CD4-positive, alpha-beta memory T cell (primary cell): ENCODE measurements at regions of chr3 and their contacts with region 1.

Region 1: GRCh38 chr3:156554842-156555687 is at the start of gene SSR3:
- DNase-seq: peak; percentile 97 to 99 (median 99)
- H3K4me3 ChIP-seq: peak within 1 kb of the TSS; percentile 67 to 97
- H3K4me3 Mint-ChIP-seq: peak within 1 kb of the TSS; percentile 89 to 99 (median 98)
- H3K27ac ChIP-seq: peak within 1 kb of the TSS; percentile 72
- H3K27ac Mint-ChIP-seq: peak within 1 kb of the TSS; percentile 94 to 98 (median 95)
- H3K4me1 ChIP-seq: peaks cover 40% of the 10 kb centered on the region
- H3K4me1 Mint-ChIP-seq: peaks cover 31 to 55% (median 42%) of the 10 kb centered on the region in 4 donors
- H3K27me3 ChIP-seq: no peaks in the 10 kb centered on the region
- H3K27me3 Mint-ChIP-seq: peaks cover 0 to 5% of the 10 kb centered on the region in 2 donors
- total RNA-seq, gene SSR3: 132 to 138 TPM

Region 2: GRCh38 chr3:156483961-156484787 is 70.9 kb before region 1 on chr3:
- CTCF ChIA-PET with region 1: interaction called, 3 read pairs
- POLR2A ChIA-PET with region 1: interaction called, 23 read pairs
- intact Hi-C with region 1: loop called (anchors 1 kb)
- DNase-seq: peak; percentile 55 to 81 (median 64)
- H3K4me3 ChIP-seq: peak overlapping the region; percentile 42 to 55
- H3K4me3 Mint-ChIP-seq: peak overlapping the region; percentile 21 to 87 (median 77)
- H3K27ac ChIP-seq: peak overlapping the region; percentile 63
- H3K27ac Mint-ChIP-seq: peak overlapping the region; percentile 77 to 94 (median 92)
- H3K4me1 ChIP-seq: peaks cover 43% of the 10 kb centered on the region
- H3K4me1 Mint-ChIP-seq: peaks cover 32 to 52% (median 39%) of the 10 kb centered on the region in 4 donors
- H3K27me3 ChIP-seq: no peaks in the 10 kb centered on the region
- H3K27me3 Mint-ChIP-seq: no peaks in the 10 kb centered on the region

Region 3: GRCh38 chr3:156633335-156633734 is 78.3 kb after region 1 on chr3:
- CTCF ChIA-PET with region 1: no interaction called
- POLR2A ChIA-PET with region 1: no interaction called
- intact Hi-C with region 1: no loop called
- DNase-seq: no peak
- H3K4me3 ChIP-seq: no peak overlapping the region
- H3K4me3 Mint-ChIP-seq: no peak overlapping the region
- H3K27ac ChIP-seq: no peak overlapping the region
- H3K27ac Mint-ChIP-seq: no peak overlapping the region
- H3K4me1 ChIP-seq: no peaks in the 10 kb centered on the region
- H3K4me1 Mint-ChIP-seq: no peaks in the 10 kb centered on the region
- H3K27me3 ChIP-seq: no peaks in the 10 kb centered on the region
- H3K27me3 Mint-ChIP-seq: no peaks in the 10 kb centered on the region

Region 4: DNA sequence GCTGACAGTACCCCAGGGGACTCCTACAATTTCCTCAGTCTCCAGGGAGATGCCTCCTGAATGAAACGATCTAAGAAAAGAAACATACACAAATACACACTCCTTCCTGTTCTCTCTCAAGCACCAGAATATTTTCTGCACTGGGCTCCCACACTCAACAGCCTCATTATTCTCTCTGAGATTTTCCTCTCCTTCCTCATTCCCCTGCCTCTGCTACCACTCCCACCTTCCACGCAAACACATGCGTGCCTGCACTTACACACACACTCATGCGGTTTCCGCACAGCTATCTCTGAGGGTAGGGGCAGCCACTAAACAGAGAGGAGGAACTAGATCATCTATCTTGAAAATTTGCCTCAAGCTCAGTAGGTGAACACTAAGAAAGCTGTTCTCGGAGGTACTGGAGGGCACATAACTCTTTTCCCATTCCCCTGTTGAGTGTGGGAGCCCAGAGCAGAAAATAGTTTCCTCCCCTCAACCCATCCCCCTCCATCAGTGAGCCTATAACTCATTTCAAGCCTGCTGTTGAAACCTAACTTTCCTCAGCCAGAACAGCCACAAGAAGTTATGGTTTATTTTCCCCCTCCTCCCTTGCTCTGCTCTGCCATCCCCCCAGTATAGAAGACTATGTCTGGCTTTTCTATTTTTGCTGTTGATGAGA is 88.8 kb after region 1 on chr3:
- CTCF ChIA-PET with region 1: no interaction called
- POLR2A ChIA-PET with region 1: interaction called, 14 read pairs
- intact Hi-C with region 1: no loop called
- DNase-seq: peak; percentile 22 to 45 (median 38)
- H3K4me3 ChIP-seq: no peak overlapping the region
- H3K4me3 Mint-ChIP-seq: peak overlapping the region; percentile 37 to 83 (median 61)
- H3K27ac ChIP-seq: no peak overlapping the region
- H3K27ac Mint-ChIP-seq: peak overlapping the region in 6 of 7 donors; percentile 1 to 88 (median 73)
- H3K4me1 ChIP-seq: peaks cover 21% of the 10 kb centered on the region
- H3K4me1 Mint-ChIP-seq: peaks cover 7 to 15% (median 11%) of the 10 kb centered on the region in 4 donors
- H3K27me3 ChIP-seq: no peaks in the 10 kb centered on the region
- H3K27me3 Mint-ChIP-seq: peaks cover 3 to 5% of the 10 kb centered on the region in 2 donors

Region 5: GRCh38 chr3:156681002-156681401 is 125.9 kb after region 1 on chr3:
- CTCF ChIA-PET with region 1: interaction called, 12 read pairs
- POLR2A ChIA-PET with region 1: interaction called, 140 read pairs
- intact Hi-C with region 1: no loop called
- DNase-seq: no peak
- H3K4me3 ChIP-seq: no peak overlapping the region
- H3K4me3 Mint-ChIP-seq: peak overlapping the region; percentile 65 to 73 (median 68)
- H3K27ac ChIP-seq: no peak overlapping the region
- H3K27ac Mint-ChIP-seq: peak overlapping the region in 6 of 7 donors; percentile 17 to 75 (median 62)
- H3K4me1 ChIP-seq: peaks cover 99% of the 10 kb centered on the region
- H3K4me1 Mint-ChIP-seq: peaks cover 64 to 93% (median 81%) of the 10 kb centered on the region in 4 donors
- H3K27me3 ChIP-seq: no peaks in the 10 kb centered on the region
- H3K27me3 Mint-ChIP-seq: no peaks in the 10 kb centered on the region

Region 6: GRCh38 chr3:156772581-156773206 is 217.6 kb after region 1 on chr3:
- CTCF ChIA-PET with region 1: no interaction called
- POLR2A ChIA-PET with region 1: no interaction called
- intact Hi-C with region 1: no loop called
- DNase-seq: no peak
- H3K4me3 ChIP-seq: no peak overlapping the region
- H3K4me3 Mint-ChIP-seq: no peak overlapping the region
- H3K27ac ChIP-seq: no peak overlapping the region
- H3K27ac Mint-ChIP-seq: no peak overlapping the region
- H3K4me1 ChIP-seq: no peaks in the 10 kb centered on the region
- H3K4me1 Mint-ChIP-seq: peaks cover 0 to 2% (median 0%) of the 10 kb centered on the region in 4 donors
- H3K27me3 ChIP-seq: no peaks in the 10 kb centered on the region
- H3K27me3 Mint-ChIP-seq: peaks cover 0 to 2% of the 10 kb centered on the region in 2 donors

Region 7: DNA sequence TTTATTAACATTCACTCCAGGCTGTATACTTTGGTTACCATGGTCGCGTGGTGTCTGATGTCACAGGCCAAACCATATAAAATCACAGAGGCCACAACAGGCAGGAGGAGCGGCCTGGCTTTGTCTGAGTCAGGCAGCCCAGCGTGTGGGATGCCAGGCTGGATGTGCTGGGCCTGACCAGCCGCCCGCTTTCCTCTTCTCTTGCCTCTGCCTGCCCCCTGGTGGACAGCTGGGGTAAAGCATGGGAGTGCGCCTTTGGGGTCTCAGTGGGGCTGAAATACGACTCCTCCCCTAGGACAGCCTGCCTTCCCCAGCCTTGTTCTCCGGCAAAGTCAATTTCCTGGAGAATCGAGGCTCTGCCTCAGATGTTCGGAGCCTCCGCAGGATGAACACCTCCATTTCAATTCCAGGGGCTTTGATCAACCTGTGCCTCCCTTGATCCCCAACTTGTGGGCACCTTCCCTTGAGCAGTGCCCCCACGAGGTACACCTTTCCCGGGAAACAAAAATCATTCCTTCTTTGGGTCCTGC is 526.7 kb after region 1 on chr3:
- CTCF ChIA-PET with region 1: interaction called, 29 read pairs
- POLR2A ChIA-PET with region 1: interaction called, 36 read pairs
- intact Hi-C with region 1: loop called (anchors 2 kb)
- DNase-seq: peak; percentile 82 to 92 (median 83)
- H3K4me3 ChIP-seq: no peak overlapping the region
- H3K4me3 Mint-ChIP-seq: peak overlapping the region in 5 of 8 donors; percentile 11 to 39 (median 21)
- H3K27ac ChIP-seq: peak overlapping the region; percentile 55
- H3K27ac Mint-ChIP-seq: peak overlapping the region; percentile 85 to 96 (median 89)
- H3K4me1 ChIP-seq: peaks cover 20% of the 10 kb centered on the region
- H3K4me1 Mint-ChIP-seq: peaks cover 10 to 29% (median 17%) of the 10 kb centered on the region in 4 donors
- H3K27me3 ChIP-seq: no peaks in the 10 kb centered on the region
- H3K27me3 Mint-ChIP-seq: no peaks in the 10 kb centered on the region

Region 8: GRCh38 chr3:157130467-157131251 is 575.6 kb after region 1 on chr3:
- CTCF ChIA-PET with region 1: interaction called, 13 read pairs
- POLR2A ChIA-PET with region 1: interaction called, 13 read pairs
- intact Hi-C with region 1: loop called (anchors 1 kb)
- DNase-seq: peak; percentile 81 to 94 (median 84)
- H3K4me3 ChIP-seq: peak overlapping the region; percentile 4 to 45
- H3K4me3 Mint-ChIP-seq: peak overlapping the region; percentile 50 to 91 (median 76)
- H3K27ac ChIP-seq: peak overlapping the region; percentile 83
- H3K27ac Mint-ChIP-seq: peak overlapping the region; percentile 95 to 99 (median 97)
- H3K4me1 ChIP-seq: peaks cover 73% of the 10 kb centered on the region
- H3K4me1 Mint-ChIP-seq: peaks cover 48 to 86% (median 66%) of the 10 kb centered on the region in 4 donors
- H3K27me3 ChIP-seq: no peaks in the 10 kb centered on the region
- H3K27me3 Mint-ChIP-seq: no peaks in the 10 kb centered on the region

Region 9: GRCh38 chr3:157174649-157175498 is 619.8 kb after region 1 on chr3:
- CTCF ChIA-PET with region 1: interaction called, 6 read pairs
- POLR2A ChIA-PET with region 1: interaction called, 22 read pairs
- intact Hi-C with region 1: loop called (anchors 1 kb)
- DNase-seq: peak; percentile 95 to 99 (median 99)
- H3K4me3 ChIP-seq: peak overlapping the region; percentile 82 to 95
- H3K4me3 Mint-ChIP-seq: peak overlapping the region; percentile 85 to 96 (median 93)
- H3K27ac ChIP-seq: peak overlapping the region; percentile 94
- H3K27ac Mint-ChIP-seq: peak overlapping the region; percentile 94 to 99 (median 98)
- H3K4me1 ChIP-seq: peaks cover 22% of the 10 kb centered on the region
- H3K4me1 Mint-ChIP-seq: peaks cover 10 to 30% (median 21%) of the 10 kb centered on the region in 4 donors
- H3K27me3 ChIP-seq: no peaks in the 10 kb centered on the region
- H3K27me3 Mint-ChIP-seq: no peaks in the 10 kb centered on the region